ENCODE measurements at regions of chr17 and their contacts with region 1.

Region 1: GRCh38 chr17:48954300-48954755 is 9.7 kb upstream of the SNF8 start:
- DNase-seq: peak; percentile 58

Region 2: GRCh38 chr17:48295362-48296288 is 658.7 kb before region 1 on chr17:
- CTCF ChIA-PET with region 1: interaction called, 10 read pairs
- POLR2A ChIA-PET with region 1: no interaction called
- DNase-seq: no peak

Region 3: GRCh38 chr17:48841395-48841831 is 112.9 kb before region 1 on chr17:
- CTCF ChIA-PET with region 1: no interaction called
- POLR2A ChIA-PET with region 1: no interaction called
- DNase-seq: no peak

Region 4: DNA sequence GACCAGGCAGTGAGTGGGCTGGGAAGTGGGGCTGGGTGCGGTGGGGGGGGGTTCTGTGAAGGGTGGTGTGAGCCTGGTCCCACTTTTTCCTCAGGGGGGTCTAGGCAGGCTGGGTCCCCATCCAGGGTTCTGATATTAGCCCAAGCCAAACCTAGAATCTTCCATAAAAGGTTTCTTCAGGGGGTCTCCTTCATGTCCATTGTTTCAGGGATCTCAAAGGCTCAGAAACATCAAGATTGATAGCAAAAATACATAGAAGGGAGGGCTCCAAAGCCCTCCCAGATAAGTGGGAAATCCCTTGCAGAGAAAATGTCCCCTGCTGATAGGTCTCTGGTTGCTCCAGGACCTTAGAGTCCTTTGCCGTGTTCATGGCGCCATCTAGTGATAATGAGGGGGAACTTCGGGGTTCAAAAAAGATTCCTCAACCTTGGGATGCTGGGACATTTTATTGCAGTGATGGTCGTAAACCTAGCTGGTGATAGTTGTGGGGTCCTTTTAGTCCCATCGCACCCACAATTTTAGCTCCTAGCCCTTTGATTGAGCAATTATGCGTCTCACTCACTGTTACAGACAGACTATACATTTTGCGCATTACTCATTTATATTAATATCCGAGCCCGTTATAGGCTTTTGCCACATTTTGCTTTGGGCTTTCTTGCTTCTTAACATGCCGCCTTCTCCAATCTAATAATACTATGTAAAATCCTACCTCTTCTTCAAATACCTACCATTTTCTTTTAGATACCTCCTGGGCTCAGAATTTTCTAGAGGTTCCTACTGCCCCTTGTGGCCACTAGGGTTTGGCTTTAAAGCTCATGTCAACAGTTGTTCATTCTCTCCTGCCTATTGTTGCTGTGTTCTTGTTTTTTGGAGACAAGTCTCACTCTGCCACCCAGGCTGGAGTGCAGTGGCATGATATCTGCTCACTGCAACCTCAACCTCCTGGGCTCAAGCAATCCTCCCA is 77.9 kb after region 1 on chr17:
- CTCF ChIA-PET with region 1: interaction called, 22 read pairs
- POLR2A ChIA-PET with region 1: interaction called, 4 read pairs
- DNase-seq: peak; percentile 89

Measured in HEK293T (cell line).